ENCODE measurements at regions of chr2 and their contacts with region 1.

Region 1: GRCh38 chr2:169221745-169222369 is 140.5 kb downstream of the LRP2 start:
- DNase-seq: no peak
- ATAC-seq: peak; percentile 48; the same call in 1 of the 2 replicates
- H3K4me3 ChIP-seq: no peak overlapping the region
- H3K27ac ChIP-seq: no peak overlapping the region
- H3K4me1 ChIP-seq: no peaks in the 10 kb centered on the region
- H3K27me3 ChIP-seq: no peaks in the 10 kb centered on the region
- CTCF ChIP-seq: 0 out of 2 replicates have a peak, but pooled peaks have one; percentile 22
- POLR2A ChIP-seq: no peak
- RAD21 ChIP-seq: no peak

Region 2: GRCh38 chr2:168961450-168962229 is 260.2 kb before region 1 on chr2:
- CTCF ChIA-PET with region 1: no interaction called
- POLR2A ChIA-PET with region 1: no interaction called
- dilution Hi-C with region 1: no loop called
- in situ Hi-C with region 1: no loop called
- intact Hi-C with region 1: loop called (anchors 2 kb)
- DNase-seq: peak; percentile 72
- ATAC-seq: peak; percentile 94
- H3K4me3 ChIP-seq: no peak overlapping the region
- H3K27ac ChIP-seq: no peak overlapping the region
- H3K4me1 ChIP-seq: no peaks in the 10 kb centered on the region
- H3K27me3 ChIP-seq: no peaks in the 10 kb centered on the region
- CTCF ChIP-seq: peak; percentile 72
- POLR2A ChIP-seq: no peak
- RAD21 ChIP-seq: peak; percentile 57